ENCODE measurements at regions of chr2 and their contacts with region 1.

Region 1: DNA sequence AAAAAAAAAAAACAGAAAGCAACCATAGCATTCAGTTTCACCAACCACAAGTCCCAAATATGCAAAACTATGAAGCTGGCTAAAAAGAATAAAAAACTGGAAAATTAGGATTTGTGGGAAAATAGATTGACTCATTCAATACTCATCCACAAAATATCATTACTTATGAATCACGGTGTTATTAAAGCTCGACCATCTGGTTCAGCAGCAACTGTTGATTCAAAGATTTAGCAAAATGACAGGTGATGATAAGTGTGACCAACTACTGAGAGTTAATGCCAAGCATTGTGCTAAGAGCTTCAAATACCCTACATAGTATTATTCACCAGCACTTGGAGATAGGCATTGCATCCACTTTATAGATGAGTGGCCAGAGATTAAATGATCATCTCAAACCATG is 26.2 kb upstream of the XDH start:
- DNase-seq: peak; percentile 85
- H3K4me3 ChIP-seq: no peak overlapping the region
- H3K27me3 ChIP-seq: no peaks in the 10 kb centered on the region
- CTCF ChIP-seq: no peak

Region 2: DNA sequence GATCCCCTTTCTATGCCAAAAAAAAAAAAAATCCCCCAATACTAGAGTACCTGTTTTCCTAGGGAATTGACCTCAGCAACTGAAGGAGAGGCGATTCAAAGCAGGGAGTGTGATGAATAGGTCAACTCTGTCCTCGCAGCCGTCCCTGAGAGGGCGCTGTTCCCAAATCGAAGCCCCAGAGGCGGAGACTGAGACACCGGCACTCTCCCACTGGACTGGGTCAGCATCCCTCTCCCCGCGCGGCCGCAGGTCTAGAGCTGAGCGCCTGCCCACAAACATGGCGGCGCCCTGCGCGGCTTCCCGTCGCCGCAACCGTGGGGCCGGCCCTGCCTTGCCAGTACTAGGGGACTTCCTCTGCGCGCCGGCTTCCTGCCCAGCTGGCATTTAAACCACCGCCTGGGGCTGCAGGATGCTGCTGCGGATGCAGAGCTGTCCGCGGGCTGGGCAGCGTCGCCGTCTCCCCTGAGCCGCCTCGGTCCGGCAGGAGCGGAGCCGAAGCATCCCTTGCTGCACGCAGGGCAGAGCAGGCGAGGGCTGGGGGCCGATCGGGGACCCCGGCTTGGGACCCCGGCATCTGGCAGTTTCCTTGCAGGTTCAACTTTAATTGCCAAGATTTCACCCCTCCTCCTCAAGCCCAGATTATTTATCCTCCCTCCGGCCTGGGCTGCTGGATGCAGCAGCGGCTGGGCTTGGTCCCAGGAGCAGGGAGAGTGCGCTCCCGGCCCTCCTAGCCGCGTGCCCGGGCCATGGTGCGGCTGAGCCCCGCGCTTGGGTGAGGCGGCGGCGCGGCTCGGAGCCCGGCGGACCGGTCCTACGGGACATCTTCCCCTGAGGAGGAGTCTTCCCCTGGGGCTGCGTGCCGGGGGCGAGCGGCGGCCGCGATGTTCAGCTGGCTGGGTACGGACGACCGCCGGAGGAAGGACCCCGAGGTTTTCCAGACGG is 206.8 kb before region 1 on chr2 and contains the start of gene EHD3:
- CTCF ChIA-PET with region 1: no interaction called
- POLR2A ChIA-PET with region 1: interaction called, 12 read pairs
- DNase-seq: peak; percentile 59
- H3K4me3 ChIP-seq: peak within 1 kb of the TSS; percentile 77
- H3K27me3 ChIP-seq: no peaks in the 10 kb centered on the region
- CTCF ChIP-seq: peak; percentile 87
- polyA plus RNA-seq, gene EHD3: 46.5 and 69.4 TPM in 2 replicates

Region 3: DNA sequence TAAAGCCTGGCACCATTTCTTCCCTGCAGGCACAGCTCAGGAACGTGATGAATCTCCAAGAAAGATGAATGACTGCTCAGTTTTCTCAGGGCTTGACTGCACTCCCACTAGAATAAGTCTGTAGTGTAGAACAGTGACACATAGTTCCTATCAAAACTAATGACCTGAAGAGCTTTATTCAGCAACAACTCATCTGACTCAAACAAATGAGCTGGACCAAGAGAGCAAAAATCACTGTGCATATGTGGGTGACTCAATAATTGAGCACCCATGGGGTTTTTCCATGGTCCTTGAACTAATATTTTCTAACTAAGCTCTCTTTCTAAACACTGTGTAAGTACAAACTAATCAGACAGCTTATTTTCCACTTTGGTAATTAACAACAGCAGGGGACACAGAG is 34.9 kb after region 1 on chr2:
- CTCF ChIA-PET with region 1: no interaction called
- POLR2A ChIA-PET with region 1: interaction called, 12 read pairs
- DNase-seq: peak; percentile 44
- H3K4me3 ChIP-seq: no peak overlapping the region
- H3K27me3 ChIP-seq: no peaks in the 10 kb centered on the region
- CTCF ChIP-seq: no peak

Region 4: DNA sequence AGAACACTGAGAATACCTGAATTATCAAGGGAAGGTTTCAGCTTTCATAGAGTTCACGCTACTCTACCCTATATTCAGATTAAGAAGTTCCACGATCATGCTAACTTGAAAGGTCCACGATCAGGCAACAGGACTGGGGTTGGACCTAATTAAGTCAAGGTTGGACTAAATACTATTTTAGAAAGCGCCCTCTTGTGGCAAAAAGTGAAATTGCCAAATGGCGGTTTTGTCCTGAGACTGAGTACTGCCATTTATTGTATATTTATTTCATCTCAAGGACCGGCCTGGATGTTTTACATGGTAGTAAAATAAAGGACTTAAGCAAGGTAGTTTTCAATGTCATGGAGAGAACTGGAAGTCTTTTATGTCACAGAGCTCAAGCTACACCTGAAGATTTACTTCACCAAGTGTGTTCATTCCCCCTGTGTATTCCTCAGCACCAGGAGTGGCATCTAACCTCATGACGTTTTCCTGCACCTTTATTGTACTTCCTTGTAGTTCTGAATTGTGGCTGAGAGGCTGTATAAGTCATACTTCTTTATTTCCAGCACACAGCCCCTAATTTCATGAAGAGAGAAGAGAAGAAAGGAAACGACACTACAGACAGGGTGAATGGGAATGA is 83.2 kb after region 1 on chr2:
- CTCF ChIA-PET with region 1: interaction called, 14 read pairs
- POLR2A ChIA-PET with region 1: no interaction called
- DNase-seq: no peak
- H3K4me3 ChIP-seq: no peak overlapping the region
- H3K27me3 ChIP-seq: no peaks in the 10 kb centered on the region
- CTCF ChIP-seq: peak; percentile 71

Measured in BJ (cell line).